ENCODE measurements at regions of chr1 and their contacts with region 1.

Region 1: DNA sequence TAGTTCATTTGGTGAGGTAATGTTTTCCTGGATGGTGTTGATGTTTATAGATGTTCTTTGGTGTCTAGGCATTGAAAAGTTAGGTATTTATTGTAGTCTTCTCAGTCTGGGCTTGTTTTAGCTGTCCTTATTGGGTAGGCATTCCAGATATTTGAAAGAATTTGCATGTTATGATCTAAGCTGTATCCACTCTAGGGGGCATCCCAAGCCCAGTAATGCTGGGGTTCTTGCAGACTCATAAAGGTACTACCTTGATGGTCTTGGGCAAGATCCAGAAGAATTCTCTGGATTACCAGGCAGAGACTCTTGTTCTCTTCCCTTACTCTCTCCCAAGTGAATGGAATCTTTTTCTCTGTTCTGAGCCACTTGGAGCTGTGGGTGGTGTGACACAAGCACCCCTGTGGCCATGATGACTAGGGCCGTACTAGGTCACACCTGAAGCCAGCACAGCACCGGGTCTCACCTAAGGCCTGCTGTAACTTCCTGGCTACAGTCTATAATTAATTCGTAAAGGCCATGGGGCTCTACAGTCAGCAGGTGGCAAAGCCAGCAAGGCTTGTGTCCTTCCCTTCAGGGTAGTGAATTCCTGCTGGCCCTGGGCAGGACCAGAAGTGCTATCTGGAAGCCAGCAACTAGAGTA is 74.8 kb upstream of the PDE4B start:
- DNase-seq: no peak
- H3K4me3 ChIP-seq: no peak overlapping the region
- H3K27ac ChIP-seq: no peak overlapping the region
- H3K4me1 ChIP-seq: no peaks in the 10 kb centered on the region
- H3K27me3 ChIP-seq: no peaks in the 10 kb centered on the region
- CTCF ChIP-seq: peak in 1 of 5 experiments; percentile 9
- EP300 ChIP-seq: no peak
- POLR2A ChIP-seq: no peak

Region 2: GRCh38 chr1:65528147-65528546 is 189.8 kb before region 1 on chr1:
- in situ Hi-C with region 1: no loop called
- intact Hi-C with region 1: no loop called
- DNase-seq: no peak
- H3K4me3 ChIP-seq: no peak overlapping the region
- H3K27ac ChIP-seq: no peak overlapping the region
- H3K4me1 ChIP-seq: peaks cover 0 to 10% (median 4%) of the 10 kb centered on the region in 4 donors
- H3K27me3 ChIP-seq: peaks cover 47% of the 10 kb centered on the region
- CTCF ChIP-seq: no peak
- EP300 ChIP-seq: no peak
- POLR2A ChIP-seq: no peak

Region 3: DNA sequence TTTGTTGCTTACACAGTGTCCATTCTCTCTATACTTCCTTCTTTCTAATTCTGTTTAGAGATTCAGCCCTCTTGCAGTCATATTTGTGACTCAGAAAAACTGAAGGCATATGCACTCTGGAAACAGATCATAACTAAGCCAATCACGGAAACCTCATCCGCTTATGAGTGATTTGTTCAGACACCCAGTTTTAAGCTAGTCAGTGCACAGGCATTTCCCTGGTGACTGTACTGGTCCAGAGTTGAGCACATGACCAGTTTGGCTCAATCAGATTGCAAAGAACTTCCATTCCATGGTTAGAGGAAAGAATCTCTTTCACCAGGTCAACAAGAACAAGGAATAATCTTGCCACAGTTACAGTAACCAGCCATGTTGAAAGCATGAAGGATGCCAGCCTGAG is 746.9 kb after region 1 on chr1:
- in situ Hi-C with region 1: loop called in 1 of 4 experiments (anchors 25 kb)
- intact Hi-C with region 1: no loop called
- DNase-seq: no peak
- H3K4me3 ChIP-seq: no peak overlapping the region
- H3K27ac ChIP-seq: no peak overlapping the region
- H3K4me1 ChIP-seq: no peaks in the 10 kb centered on the region
- H3K27me3 ChIP-seq: no peaks in the 10 kb centered on the region
- CTCF ChIP-seq: no peak
- EP300 ChIP-seq: no peak
- POLR2A ChIP-seq: no peak

Region 4: DNA sequence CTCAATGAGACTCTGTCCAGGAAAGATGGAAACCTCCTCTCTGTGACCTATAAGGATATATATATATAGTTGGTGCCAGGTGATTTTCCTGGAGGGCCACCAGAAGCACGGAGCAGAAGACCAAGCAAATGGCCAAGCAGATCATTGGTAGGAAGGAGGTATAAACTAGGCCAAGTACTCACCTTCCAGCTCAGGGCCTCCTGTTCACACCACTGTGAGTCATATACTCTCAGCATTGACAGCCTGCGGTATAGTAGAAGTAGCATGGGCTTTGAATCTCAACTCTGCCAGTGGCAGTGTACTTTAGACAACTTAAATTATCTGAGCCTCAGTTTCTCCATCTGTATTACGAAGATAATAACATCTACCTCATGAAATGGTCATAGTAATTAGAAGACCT is 1605.2 kb after region 1 on chr1:
- in situ Hi-C with region 1: no loop called
- intact Hi-C with region 1: no loop called
- DNase-seq: no peak
- H3K4me3 ChIP-seq: no peak overlapping the region
- H3K27ac ChIP-seq: no peak overlapping the region
- H3K4me1 ChIP-seq: no peaks in the 10 kb centered on the region
- H3K27me3 ChIP-seq: no peaks in the 10 kb centered on the region
- CTCF ChIP-seq: no peak
- EP300 ChIP-seq: no peak
- POLR2A ChIP-seq: no peak